Caco-2 (cell line): ENCODE measurements at regions of chr5 and their contacts with region 1.

Region 1: DNA sequence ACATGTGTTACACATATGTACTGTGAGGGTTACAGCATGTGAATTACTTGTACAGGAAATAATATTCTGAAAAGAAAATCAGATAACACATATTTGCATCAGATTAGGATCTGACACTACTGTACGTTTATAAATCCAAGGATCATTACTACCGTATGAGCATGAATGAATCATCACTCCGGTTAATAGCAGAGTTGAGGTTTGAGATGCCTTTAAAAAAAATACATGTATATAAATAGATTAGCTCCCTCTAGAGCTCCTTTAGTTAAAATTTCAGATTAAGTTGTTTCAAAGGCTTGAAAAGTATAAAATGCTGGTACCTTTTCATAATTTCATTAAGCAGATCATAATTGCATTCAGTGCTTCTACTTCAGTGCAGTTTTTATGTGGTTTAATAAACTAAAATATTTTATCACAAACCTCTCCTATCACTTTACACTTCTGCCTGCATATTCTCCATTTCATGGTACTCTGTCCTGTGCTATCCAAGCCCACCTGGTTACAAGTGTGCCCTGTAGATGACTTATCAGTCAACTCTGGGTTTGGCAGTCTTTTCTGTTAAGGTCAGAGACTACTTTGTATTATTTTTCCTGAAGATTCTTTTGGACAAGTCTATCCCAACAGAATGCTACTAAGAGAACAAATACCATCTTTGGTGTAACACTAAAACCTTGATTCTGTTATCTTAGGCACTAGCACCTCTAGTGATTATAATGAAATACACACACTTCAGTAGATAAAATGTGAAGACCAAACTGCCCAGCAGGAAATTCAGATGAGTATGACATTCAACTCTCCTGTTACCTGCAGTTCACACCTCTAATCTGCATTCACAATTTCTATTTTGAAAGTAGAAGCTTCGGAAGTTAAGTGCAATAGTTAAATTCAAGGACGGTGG is 48.0 kb upstream of the POU5F2 start:
- DNase-seq: no peak
- H3K4me3 ChIP-seq: no peak overlapping the region
- H3K4me3 Mint-ChIP-seq: no peak overlapping the region
- H3K27ac Mint-ChIP-seq: no peak overlapping the region
- H3K4me1 ChIP-seq: no peaks in the 10 kb centered on the region
- H3K4me1 Mint-ChIP-seq: peaks cover 10% of the 10 kb centered on the region
- H3K27me3 ChIP-seq: no peaks in the 10 kb centered on the region
- H3K27me3 Mint-ChIP-seq: no peaks in the 10 kb centered on the region
- CTCF ChIP-seq: no peak

Region 2: DNA sequence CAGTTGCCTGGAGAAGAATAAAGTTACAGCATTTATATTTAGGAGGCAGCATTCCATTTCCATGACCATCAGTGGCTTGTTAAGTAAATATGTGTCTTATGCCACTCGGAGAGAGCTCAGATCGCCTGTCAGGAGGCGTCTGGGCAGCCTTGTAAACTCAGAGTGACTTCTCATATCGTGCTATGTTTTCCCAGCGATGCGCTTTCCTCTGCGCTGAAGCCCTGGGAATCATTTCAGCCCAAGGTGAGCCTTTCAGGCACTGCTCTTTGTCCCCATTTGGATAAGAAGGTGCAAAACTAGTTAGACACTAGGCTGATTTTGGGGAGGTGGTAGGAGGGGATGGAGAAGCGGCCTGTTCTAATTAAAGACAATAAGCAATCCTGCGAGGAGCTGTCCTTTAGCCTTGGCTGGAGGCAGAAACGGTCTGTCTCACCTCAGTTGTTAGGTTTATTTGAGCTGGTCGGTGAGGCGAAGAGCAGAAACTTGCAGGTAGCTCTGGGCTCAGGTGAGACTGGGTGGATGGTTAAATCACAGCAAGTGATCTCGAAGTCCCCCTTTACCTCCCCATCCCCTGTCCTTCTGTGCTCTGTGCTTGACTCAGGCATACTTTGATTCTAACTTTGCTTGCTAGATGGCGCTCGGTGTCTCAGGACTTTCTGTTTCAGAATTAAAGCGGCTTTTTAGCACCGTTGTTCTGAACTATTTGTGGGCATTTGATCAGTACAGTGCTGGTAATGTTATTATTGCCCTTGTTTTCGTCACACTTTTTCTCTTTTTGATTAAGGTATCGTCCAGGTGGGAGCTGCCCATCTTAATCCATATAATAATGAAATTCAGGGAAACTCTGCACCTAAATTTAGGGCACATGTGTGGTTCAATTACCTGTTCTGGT is 181.8 kb before region 1 on chr5:
- CTCF ChIA-PET with region 1: no interaction called
- POLR2A ChIA-PET with region 1: no interaction called
- intact Hi-C with region 1: loop called (anchors 5 kb)
- DNase-seq: peak in 1 of 2 experiments; percentile 45
- H3K4me3 ChIP-seq: no peak overlapping the region
- H3K4me3 Mint-ChIP-seq: no peak overlapping the region
- H3K27ac Mint-ChIP-seq: no peak overlapping the region
- H3K4me1 ChIP-seq: no peaks in the 10 kb centered on the region
- H3K4me1 Mint-ChIP-seq: peaks cover 3% of the 10 kb centered on the region
- H3K27me3 ChIP-seq: peaks cover 3% of the 10 kb centered on the region; the same call in 1 of the 2 replicates
- H3K27me3 Mint-ChIP-seq: peaks cover 26% of the 10 kb centered on the region
- CTCF ChIP-seq: peak; percentile 7 to 63

Region 3: DNA sequence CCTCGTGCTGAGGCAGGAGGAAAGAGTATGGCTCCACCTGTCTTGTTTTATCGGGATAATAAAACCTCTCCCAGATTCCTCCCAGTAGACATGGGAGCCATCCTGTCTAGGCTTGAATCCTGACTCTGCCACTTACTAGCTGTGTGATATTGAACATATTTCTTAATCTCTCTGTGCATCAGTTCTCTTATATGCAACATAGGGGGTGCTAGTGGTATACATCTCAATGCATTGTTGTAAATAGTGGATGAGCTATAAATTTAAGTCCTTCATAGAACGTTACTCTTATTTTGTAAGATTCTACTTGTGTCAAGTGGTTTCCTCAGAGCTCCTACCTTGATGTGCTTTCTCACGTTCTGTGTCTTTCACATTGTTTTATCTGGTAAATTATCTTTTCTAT is 369.7 kb after region 1 on chr5:
- CTCF ChIA-PET with region 1: no interaction called
- POLR2A ChIA-PET with region 1: no interaction called
- intact Hi-C with region 1: no loop called
- DNase-seq: no peak
- H3K4me3 ChIP-seq: no peak overlapping the region
- H3K4me3 Mint-ChIP-seq: no peak overlapping the region
- H3K27ac Mint-ChIP-seq: no peak overlapping the region
- H3K4me1 ChIP-seq: no peaks in the 10 kb centered on the region
- H3K4me1 Mint-ChIP-seq: peaks cover 6% of the 10 kb centered on the region
- H3K27me3 ChIP-seq: no peaks in the 10 kb centered on the region
- H3K27me3 Mint-ChIP-seq: no peaks in the 10 kb centered on the region
- CTCF ChIP-seq: peak in 1 of 2 experiments; percentile 17